ENCODE measurements at regions of chr11 and their contacts with region 1.

Region 1: DNA sequence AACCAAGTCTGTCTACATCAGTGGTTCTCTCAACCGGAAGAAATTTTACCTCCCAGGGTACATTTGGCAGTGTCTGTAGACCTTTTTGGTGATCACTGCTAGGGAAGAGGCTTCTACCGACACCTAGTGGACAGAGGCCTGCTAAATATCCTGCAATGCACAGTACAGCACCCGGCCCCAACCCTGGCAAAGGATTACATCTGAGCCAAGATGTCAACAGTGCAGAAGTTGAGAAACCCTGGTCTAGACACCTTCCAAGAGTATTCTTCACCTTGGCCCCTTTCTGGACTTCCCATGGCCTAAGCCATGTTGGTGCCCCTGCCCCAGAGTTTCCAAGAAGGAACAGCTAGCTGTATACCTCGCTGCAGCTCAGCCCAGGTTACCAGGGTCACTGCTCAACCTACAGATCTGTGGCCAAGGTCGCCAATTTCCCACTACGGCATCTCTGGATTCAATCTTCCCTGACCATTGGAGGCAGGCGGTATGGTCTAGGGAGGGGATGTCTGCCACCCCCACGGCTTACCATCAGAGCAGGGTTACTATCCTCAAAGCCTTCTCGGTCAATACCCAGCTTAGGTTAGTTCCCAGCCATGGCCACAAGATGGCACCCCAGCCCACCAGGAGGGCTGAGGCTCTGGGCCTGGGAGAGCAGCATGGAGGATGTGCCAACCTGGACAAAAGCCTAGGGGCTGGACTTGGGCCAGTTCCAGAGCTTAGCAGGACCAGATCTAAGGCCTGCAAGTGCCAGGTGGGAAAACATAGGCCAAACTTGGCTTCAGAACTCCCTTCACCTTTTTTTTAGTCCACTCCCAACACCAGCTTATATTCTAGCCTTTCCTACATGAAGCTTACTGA is 3.7 kb upstream of the KCNC1 start:
- DNase-seq: peak; percentile 74
- H3K4me3 ChIP-seq: no peak overlapping the region
- H3K27ac ChIP-seq: no peak overlapping the region
- H3K4me1 ChIP-seq: no peaks in the 10 kb centered on the region
- H3K27me3 ChIP-seq: peaks cover 9% of the 10 kb centered on the region
- CTCF ChIP-seq: peak; percentile 82

Region 2: DNA sequence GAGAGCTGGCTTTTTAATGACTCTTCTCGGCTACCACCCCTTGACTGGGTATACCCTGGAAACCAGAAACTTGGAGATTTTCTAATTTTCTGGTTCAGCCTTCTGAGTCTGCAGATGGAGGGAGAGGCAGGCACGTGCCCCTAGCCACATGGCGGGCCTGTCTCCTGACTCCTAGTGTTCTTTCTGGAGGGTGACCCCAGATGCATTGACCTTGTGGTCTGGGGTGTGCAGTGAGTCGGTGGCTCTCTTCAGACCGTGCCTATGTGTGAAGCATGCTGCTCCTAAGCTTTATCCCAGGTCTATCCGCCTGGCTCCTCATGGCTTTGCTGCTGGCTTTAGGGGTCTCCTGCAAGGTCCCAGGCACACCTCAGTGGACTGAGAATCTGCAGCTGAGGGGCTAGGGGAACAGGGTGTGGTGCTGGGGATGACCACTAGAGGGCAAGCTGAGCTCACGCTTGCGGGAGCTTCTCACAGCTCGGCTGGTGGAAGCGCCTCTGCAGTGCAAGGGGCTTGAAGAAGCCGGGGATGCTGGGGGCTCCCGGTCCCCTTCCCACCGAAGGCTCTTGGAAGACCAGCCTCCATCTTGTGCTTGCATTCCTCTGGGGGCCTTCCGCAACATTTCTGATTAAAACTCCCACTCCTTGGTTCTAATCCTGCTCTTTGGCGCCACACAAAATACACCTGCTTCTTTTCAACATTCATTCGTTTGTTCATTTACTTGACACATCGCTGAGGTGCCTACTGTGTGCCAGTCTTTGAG is 132.0 kb before region 1 on chr11:
- intact Hi-C with region 1: loop called (anchors 10 kb)
- DNase-seq: peak; percentile 72
- H3K4me3 ChIP-seq: no peak overlapping the region
- H3K27ac ChIP-seq: no peak overlapping the region
- H3K4me1 ChIP-seq: no peaks in the 10 kb centered on the region
- H3K27me3 ChIP-seq: no peaks in the 10 kb centered on the region
- CTCF ChIP-seq: peak; percentile 86

Region 3: DNA sequence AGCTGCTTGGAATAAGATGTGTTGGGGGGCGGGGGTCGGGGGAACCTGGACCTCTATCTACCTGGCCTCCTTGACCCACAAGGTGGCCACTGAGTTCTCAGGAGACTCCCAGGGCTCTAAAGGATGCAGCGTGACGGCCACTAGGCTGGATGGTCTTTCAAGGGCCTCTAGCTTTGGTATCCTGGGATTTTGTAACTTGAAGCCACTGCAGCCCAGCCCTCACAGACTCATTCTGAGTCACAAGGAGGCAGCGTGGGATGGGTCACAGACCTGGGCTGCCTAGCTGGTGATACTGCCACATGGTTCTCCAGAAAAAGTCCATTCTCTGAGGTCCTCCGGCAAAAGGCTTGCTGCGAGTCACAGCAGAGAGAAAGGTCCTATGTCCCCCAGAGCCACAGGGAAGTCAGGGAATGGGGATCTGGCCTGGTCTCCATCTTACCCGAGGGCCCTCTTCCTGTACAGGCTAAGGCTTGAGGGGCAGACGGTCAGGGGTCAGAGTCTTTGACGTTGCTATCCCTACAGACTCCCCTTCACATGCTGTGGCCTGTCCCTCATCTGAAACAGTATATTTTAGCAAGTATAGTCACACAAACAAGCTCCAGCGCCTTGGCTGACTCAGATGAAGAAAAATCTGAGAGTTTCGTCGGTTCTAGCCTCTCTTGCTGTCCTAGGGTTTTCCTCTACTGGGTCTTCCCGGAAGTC is 56.1 kb after region 1 on chr11:
- intact Hi-C with region 1: no loop called
- DNase-seq: no peak
- H3K4me3 ChIP-seq: no peak overlapping the region
- H3K27ac ChIP-seq: no peak overlapping the region
- H3K4me1 ChIP-seq: no peaks in the 10 kb centered on the region
- H3K27me3 ChIP-seq: no peaks in the 10 kb centered on the region
- CTCF ChIP-seq: no peak

Region 4: DNA sequence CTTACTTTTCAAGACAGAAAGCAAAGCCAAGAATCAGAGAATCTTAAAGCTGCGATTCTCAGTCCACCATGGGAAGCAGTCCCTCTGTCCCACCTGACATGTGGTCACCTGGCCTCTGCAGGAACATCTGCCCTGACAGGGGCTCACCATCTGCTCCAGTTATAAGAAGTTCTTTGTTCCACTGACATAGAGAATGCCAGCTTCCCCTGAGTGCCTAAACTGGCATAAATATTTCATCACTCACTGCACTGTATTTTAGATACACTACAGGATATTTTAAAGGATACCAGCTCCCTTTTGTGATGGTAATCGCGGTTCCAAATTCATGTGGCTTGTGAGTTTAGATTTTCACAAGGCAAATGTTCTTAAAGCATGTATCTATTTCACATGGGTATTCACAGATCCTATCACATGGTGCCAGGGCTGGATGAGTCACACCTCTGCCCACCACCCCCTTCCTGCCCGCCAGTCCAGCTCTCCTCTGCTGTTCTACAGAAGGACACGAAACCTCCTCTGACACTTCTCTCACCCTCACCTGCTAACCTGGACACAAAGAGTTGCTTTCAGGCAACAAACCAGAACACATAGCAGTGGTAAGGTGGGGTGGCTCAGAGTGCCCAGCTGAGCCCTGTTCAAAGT is 109.3 kb after region 1 on chr11:
- intact Hi-C with region 1: no loop called
- DNase-seq: no peak
- H3K4me3 ChIP-seq: no peak overlapping the region
- H3K27ac ChIP-seq: no peak overlapping the region
- H3K4me1 ChIP-seq: no peaks in the 10 kb centered on the region
- H3K27me3 ChIP-seq: no peaks in the 10 kb centered on the region
- CTCF ChIP-seq: no peak

Measured in colonic mucosa (tissue), 4 donors.